MCF 10A (cell line): ENCODE measurements at regions of chr2 and their contacts with region 1.

Region 1: DNA sequence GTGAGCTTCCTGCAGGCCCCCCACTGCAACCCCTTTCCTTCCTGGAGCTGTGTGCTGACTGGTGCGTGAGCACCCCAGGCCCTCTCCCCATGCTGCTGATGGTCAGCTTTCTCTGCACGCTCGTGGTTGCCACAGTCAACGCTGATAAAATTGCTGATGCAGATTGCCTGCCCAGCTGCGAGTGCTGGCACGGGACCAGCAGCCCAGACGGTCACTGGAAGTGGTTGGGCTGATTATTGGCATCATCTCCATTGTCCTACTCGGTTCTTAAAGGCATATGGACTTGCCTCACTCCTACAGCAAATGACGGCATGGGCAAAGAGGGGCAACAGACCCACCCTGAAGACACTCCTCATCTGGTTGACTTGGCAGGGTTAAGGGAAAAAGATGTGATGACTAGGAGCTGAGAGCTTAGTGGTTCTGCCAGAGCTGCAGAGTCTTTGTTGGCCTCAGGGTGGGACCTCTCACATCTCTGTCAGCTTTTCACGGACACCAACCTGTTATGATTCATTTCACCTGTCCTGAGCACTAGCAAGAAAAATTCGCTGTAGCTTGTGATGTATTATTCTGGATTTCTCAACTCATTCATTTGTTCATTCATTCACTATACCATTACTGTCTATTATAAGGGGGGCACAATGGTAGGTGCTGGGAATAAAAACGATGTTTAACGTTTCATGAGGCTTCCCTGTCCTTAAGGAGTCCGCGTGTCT is 38.4 kb downstream of the PAX8 start:
- DNase-seq: peak; percentile 83
- H3K4me3 Mint-ChIP-seq: peak overlapping the region; percentile 55
- H3K27ac Mint-ChIP-seq: peak overlapping the region; percentile 77
- H3K4me1 Mint-ChIP-seq: peaks cover 21% of the 10 kb centered on the region
- H3K27me3 Mint-ChIP-seq: no peaks in the 10 kb centered on the region
- CTCF ChIP-seq: no peak

Region 2: DNA sequence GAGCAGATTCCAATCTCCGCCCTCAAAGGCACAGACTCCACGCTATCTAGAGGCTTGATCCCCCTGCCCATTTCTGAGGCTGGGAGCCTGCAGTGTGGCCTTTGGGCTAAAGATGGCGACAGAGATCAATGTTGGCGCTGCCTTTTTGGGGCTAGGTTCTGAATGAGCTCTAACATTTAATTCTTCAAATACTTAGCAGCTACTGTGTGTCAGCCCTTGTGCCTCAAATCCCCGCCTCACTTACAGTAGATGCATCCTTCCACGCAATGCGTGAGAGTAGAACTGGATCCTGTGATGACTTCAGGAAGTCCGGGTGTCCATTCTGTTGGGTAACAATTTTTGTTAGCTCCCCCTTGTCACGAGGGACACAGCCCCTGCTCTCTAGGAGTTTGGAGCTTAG is 160.2 kb before region 1 on chr2:
- CTCF ChIA-PET with region 1: interaction called, 4 read pairs
- POLR2A ChIA-PET with region 1: interaction called, 3 read pairs
- intact Hi-C with region 1: loop called (anchors 1 kb)
- DNase-seq: peak; percentile 62
- H3K4me3 Mint-ChIP-seq: no peak overlapping the region
- H3K27ac Mint-ChIP-seq: no peak overlapping the region
- H3K4me1 Mint-ChIP-seq: peaks cover 36% of the 10 kb centered on the region
- H3K27me3 Mint-ChIP-seq: no peaks in the 10 kb centered on the region
- CTCF ChIP-seq: peak; percentile 86

Region 3: GRCh38 chr2:113098041-113098440 is 142.3 kb before region 1 on chr2:
- CTCF ChIA-PET with region 1: no interaction called
- POLR2A ChIA-PET with region 1: no interaction called
- intact Hi-C with region 1: no loop called
- DNase-seq: no peak
- H3K4me3 Mint-ChIP-seq: no peak overlapping the region
- H3K27ac Mint-ChIP-seq: no peak overlapping the region
- H3K4me1 Mint-ChIP-seq: no peaks in the 10 kb centered on the region
- H3K27me3 Mint-ChIP-seq: peaks cover 25% of the 10 kb centered on the region
- CTCF ChIP-seq: no peak

Region 4: GRCh38 chr2:113203901-113204519 is 36.3 kb before region 1 on chr2:
- CTCF ChIA-PET with region 1: interaction called, 505 read pairs
- POLR2A ChIA-PET with region 1: interaction called, 75 read pairs
- intact Hi-C with region 1: loop called (anchors 2 kb)
- DNase-seq: peak; percentile 81
- H3K4me3 Mint-ChIP-seq: no peak overlapping the region
- H3K27ac Mint-ChIP-seq: peak overlapping the region; percentile 25
- H3K4me1 Mint-ChIP-seq: peaks cover 12% of the 10 kb centered on the region
- H3K27me3 Mint-ChIP-seq: no peaks in the 10 kb centered on the region
- CTCF ChIP-seq: peak; percentile 92

Region 5: GRCh38 chr2:113219889-113220641 is 20.2 kb before region 1 on chr2:
- CTCF ChIA-PET with region 1: interaction called, 13 read pairs
- POLR2A ChIA-PET with region 1: interaction called, 8 read pairs
- intact Hi-C with region 1: no loop called
- DNase-seq: peak; percentile 74
- H3K4me3 Mint-ChIP-seq: no peak overlapping the region
- H3K27ac Mint-ChIP-seq: peak overlapping the region; percentile 40
- H3K4me1 Mint-ChIP-seq: peaks cover 15% of the 10 kb centered on the region
- H3K27me3 Mint-ChIP-seq: no peaks in the 10 kb centered on the region
- CTCF ChIP-seq: no peak

Region 6: GRCh38 chr2:113324684-113325160 is 84.4 kb after region 1 on chr2:
- CTCF ChIA-PET with region 1: interaction called, 3 read pairs
- POLR2A ChIA-PET with region 1: interaction called, 19 read pairs
- intact Hi-C with region 1: no loop called
- DNase-seq: peak; percentile 71
- H3K4me3 Mint-ChIP-seq: peak overlapping the region; percentile 91
- H3K27ac Mint-ChIP-seq: peak overlapping the region; percentile 21
- H3K4me1 Mint-ChIP-seq: peaks cover 35% of the 10 kb centered on the region
- H3K27me3 Mint-ChIP-seq: no peaks in the 10 kb centered on the region
- CTCF ChIP-seq: no peak

Region 7: DNA sequence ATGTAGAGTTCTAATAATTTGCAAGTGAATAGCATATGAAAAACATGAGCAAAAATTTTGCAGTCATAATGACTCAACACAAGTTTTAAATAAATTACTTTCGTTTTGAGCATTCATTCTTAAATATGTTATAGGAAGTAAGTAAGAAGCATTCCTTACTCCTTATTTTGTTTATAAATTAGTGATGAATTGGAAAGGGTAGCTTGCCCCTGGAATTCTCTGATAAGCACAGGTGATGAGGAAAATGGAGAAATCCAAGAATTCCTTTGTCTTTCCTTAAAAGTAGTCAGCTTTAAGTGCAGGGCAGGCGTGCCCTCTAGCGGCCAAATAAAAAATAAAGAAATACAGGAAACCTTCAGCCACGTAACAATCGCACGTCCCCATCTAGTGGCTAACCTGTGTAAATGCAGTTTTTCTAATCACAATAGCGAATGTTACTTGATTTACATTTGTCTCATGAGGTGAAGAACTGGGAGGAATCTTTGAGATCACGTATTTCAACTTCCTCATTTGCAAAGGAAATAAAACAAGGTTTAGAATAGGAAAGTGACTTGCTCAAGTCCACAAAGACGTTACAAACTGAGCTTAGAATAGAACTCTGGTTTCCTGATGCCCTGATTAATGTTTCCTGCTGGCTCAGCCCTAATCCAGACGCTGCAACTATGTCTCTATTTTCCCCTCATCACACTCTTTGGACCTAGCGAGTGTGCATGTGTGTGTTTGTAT is 150.0 kb after region 1 on chr2:
- CTCF ChIA-PET with region 1: interaction called, 46 read pairs
- POLR2A ChIA-PET with region 1: no interaction called
- intact Hi-C with region 1: loop called (anchors 5 kb)
- DNase-seq: peak; percentile 78
- H3K4me3 Mint-ChIP-seq: no peak overlapping the region
- H3K27ac Mint-ChIP-seq: no peak overlapping the region
- H3K4me1 Mint-ChIP-seq: no peaks in the 10 kb centered on the region
- H3K27me3 Mint-ChIP-seq: no peaks in the 10 kb centered on the region
- CTCF ChIP-seq: peak; percentile 85